ENCODE measurements at regions of chr2 and their contacts with region 1.

Region 1: GRCh38 chr2:24971536-24972314 is at the start of gene DNAJC27:
- DNase-seq: peak; percentile 98 to 99 (median 98)
- H3K4me3 ChIP-seq: peak within 1 kb of the TSS; percentile 82 to 95
- H3K4me3 Mint-ChIP-seq: peak within 1 kb of the TSS; percentile 97 to 99 (median 98)
- H3K27ac ChIP-seq: peak within 1 kb of the TSS; percentile 99
- H3K27ac Mint-ChIP-seq: peak within 1 kb of the TSS; percentile 100
- H3K4me1 ChIP-seq: peaks cover 24% of the 10 kb centered on the region
- H3K4me1 Mint-ChIP-seq: peaks cover 9 to 33% (median 20%) of the 10 kb centered on the region in 4 donors
- H3K27me3 ChIP-seq: no peaks in the 10 kb centered on the region
- H3K27me3 Mint-ChIP-seq: no peaks in the 10 kb centered on the region
- total RNA-seq, gene DNAJC27: 13.2 to 14.2 TPM

Region 2: DNA sequence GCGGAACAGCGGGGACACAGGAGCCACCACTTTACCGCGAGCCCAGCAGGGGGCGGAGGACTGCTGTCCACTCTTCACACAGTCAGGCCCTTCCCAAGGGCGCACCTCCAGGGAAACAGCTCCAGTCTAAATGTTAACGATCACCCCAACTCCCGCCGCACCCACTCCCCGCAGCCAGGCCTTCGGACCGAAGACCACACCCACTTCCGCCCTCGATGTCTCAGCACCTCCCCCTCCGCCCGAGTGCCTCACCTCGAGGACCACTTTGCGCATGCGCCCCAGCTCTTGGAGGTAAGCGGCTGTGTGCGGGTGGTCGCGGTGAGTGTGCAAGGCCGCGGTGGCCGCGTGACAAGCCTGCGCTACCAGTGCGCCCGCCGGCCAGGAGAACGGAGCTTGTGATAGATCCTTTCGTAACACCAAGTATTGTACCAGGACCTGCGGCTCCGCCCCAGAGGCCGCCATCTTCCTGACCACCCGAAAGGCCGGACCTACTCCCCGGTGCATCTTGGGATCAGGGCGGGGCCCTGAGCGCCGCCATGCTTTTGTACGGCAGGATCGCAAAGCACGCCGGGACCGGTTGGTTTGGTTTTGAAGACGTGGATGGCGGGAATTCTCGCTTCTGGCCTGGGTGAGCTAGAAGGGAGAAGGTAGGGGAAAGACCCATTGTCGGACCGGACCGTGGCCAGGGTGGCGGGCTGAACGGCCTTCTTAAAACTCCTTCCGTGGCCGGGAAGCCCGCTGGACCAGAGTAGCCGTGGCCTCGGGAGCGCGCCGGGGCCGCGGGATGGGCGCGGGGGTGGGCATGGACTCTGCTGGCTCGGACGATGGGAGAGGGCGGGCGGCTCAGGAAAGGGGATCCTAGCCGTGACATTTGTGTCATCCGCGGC is 178.6 kb before region 1 on chr2 and contains the starts of genes CENPO and PTRHD1:
- CTCF ChIA-PET with region 1: interaction called, 3 read pairs
- POLR2A ChIA-PET with region 1: interaction called, 3 read pairs
- intact Hi-C with region 1: loop called (anchors 1 kb)
- DNase-seq: peak; percentile 96 to 98 (median 97)
- H3K4me3 ChIP-seq: peak within 1 kb of the TSS; percentile 85 to 97
- H3K4me3 Mint-ChIP-seq: peak within 1 kb of the TSS; percentile 94 to 99 (median 96)
- H3K27ac ChIP-seq: peak within 1 kb of the TSS; percentile 93
- H3K27ac Mint-ChIP-seq: peak within 1 kb of the TSS; percentile 98 to 100 (median 99)
- H3K4me1 ChIP-seq: peaks cover 17% of the 10 kb centered on the region
- H3K4me1 Mint-ChIP-seq: peaks cover 10 to 25% (median 17%) of the 10 kb centered on the region in 4 donors
- H3K27me3 ChIP-seq: no peaks in the 10 kb centered on the region
- H3K27me3 Mint-ChIP-seq: no peaks in the 10 kb centered on the region
- total RNA-seq, gene CENPO: 4.6 to 6.1 TPM
- total RNA-seq, gene PTRHD1: 12.0 to 12.8 TPM

Region 3: GRCh38 chr2:24993406-24994145 is 21.9 kb after region 1 on chr2:
- CTCF ChIA-PET with region 1: interaction called, 10 read pairs
- POLR2A ChIA-PET with region 1: no interaction called
- intact Hi-C with region 1: no loop called
- DNase-seq: no peak
- H3K4me3 ChIP-seq: no peak overlapping the region
- H3K4me3 Mint-ChIP-seq: peak overlapping the region in 1 of 8 donors; percentile 8
- H3K27ac ChIP-seq: no peak overlapping the region
- H3K27ac Mint-ChIP-seq: no peak overlapping the region
- H3K4me1 ChIP-seq: no peaks in the 10 kb centered on the region
- H3K4me1 Mint-ChIP-seq: no peaks in the 10 kb centered on the region
- H3K27me3 ChIP-seq: no peaks in the 10 kb centered on the region
- H3K27me3 Mint-ChIP-seq: peaks cover 5 to 7% of the 10 kb centered on the region in 2 donors

Region 4: GRCh38 chr2:25131567-25132298 is 160.0 kb after region 1 on chr2:
- CTCF ChIA-PET with region 1: interaction called, 102 read pairs
- POLR2A ChIA-PET with region 1: interaction called, 10 read pairs
- intact Hi-C with region 1: no loop called
- DNase-seq: no peak
- H3K4me3 ChIP-seq: no peak overlapping the region
- H3K4me3 Mint-ChIP-seq: peak overlapping the region; percentile 12 to 81 (median 66)
- H3K27ac ChIP-seq: no peak overlapping the region
- H3K27ac Mint-ChIP-seq: peak overlapping the region in 1 of 7 donors; percentile 38
- H3K4me1 ChIP-seq: no peaks in the 10 kb centered on the region
- H3K4me1 Mint-ChIP-seq: peaks cover 3 to 16% (median 9%) of the 10 kb centered on the region in 4 donors
- H3K27me3 ChIP-seq: peaks cover 37% of the 10 kb centered on the region
- H3K27me3 Mint-ChIP-seq: peaks cover 29 to 44% of the 10 kb centered on the region in 2 donors

Region 5: GRCh38 chr2:25215948-25216679 is 244.4 kb after region 1 on chr2:
- CTCF ChIA-PET with region 1: no interaction called
- POLR2A ChIA-PET with region 1: no interaction called
- intact Hi-C with region 1: loop called (anchors 5 kb)
- DNase-seq: peak; percentile 78 to 87 (median 86)
- H3K4me3 ChIP-seq: peak overlapping the region; percentile 51 to 61
- H3K4me3 Mint-ChIP-seq: peak overlapping the region; percentile 81 to 89 (median 83)
- H3K27ac ChIP-seq: peak overlapping the region; percentile 55
- H3K27ac Mint-ChIP-seq: peak overlapping the region; percentile 67 to 93 (median 86)
- H3K4me1 ChIP-seq: peaks cover 9% of the 10 kb centered on the region
- H3K4me1 Mint-ChIP-seq: peaks cover 6 to 29% (median 14%) of the 10 kb centered on the region in 4 donors
- H3K27me3 ChIP-seq: no peaks in the 10 kb centered on the region
- H3K27me3 Mint-ChIP-seq: no peaks in the 10 kb centered on the region

Region 6: DNA sequence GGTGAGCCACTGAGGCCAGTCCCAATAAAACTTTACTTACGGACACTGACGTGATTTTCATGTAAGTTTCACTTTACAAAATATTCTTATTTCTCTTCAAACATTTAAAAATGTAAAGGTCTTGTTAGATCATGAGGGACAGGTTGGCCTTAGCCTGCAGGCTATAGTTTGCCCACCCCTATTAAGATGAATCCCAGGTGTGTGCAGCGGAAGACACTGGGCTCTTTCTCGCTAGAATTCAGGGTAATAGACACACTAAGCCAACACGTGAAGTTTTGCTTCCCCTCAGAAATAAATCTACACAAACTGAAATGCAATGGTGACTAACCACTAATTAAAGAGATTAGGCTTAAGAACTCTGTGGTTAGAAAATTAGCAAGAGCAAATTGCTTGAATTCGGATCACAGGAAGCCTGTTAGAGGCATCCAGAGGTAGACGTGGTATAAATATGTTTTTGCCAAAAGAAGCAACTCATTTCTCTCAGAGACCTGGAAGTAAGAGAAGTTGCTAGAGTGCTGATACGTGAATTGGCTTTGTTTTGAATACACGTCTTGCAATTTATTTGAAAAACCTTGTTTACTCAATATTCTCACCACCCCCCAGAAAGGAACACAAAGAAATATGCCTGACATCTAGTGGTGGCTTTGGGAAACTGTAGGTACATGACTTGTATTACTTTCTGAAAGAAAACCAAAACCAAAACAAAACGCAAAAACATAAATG is 550.1 kb after region 1 on chr2:
- CTCF ChIA-PET with region 1: no interaction called
- POLR2A ChIA-PET with region 1: no interaction called
- intact Hi-C with region 1: loop called (anchors 10 kb)
- DNase-seq: peak; percentile 68 to 76 (median 72)
- H3K4me3 ChIP-seq: no peak overlapping the region
- H3K4me3 Mint-ChIP-seq: peak overlapping the region in 6 of 8 donors; percentile 4 to 75 (median 21)
- H3K27ac ChIP-seq: no peak overlapping the region
- H3K27ac Mint-ChIP-seq: peak overlapping the region in 5 of 7 donors; percentile 48 to 80 (median 54)
- H3K4me1 ChIP-seq: peaks cover 10% of the 10 kb centered on the region
- H3K4me1 Mint-ChIP-seq: peaks cover 4 to 12% (median 7%) of the 10 kb centered on the region in 4 donors
- H3K27me3 ChIP-seq: no peaks in the 10 kb centered on the region
- H3K27me3 Mint-ChIP-seq: no peaks in the 10 kb centered on the region

Region 7: DNA sequence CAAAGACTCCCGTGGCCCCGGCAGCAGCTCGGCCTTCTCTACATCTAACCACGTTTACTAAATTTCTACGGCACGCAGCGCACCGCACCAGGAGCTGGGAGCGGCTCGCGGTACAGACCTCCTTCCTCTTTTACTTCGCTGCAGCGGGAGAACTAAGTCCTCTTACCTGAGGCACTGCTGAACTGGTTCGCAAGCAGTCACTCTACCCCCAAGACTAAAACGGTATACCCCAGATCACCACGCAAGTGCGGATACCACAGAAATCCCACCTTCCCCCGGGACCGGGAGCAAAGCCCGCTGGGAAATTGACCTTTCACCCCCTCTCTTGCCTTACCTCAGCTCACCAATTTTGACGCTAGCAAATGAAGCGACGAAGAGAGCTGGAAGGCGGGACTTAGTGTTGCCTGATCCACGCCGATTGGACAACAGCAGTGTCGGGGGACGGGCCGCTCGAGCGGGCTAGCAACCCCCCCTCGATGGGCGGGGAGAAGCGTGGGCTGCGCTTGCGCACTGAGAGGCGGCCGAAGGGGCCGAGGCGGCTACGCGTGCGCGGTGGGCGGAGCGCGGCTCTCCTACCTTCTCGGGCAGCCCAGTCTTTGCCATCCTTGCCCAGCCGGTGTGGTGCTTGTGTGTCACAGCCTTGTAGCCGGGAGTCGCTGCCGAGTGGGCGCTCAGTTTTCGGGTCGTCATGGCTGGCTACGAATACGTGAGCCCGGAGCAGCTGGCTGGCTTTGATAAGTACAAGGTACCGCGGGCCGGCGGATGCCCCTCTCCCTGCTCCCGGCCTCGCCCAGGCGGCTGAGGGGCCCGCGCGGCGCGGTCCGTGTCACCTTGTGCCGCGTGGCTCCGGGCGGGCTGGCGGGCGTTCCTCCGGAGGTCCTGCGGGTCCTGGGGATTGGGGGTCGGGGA is 1374.1 kb after region 1 on chr2 and contains the start of gene SELENOI:
- CTCF ChIA-PET with region 1: no interaction called
- POLR2A ChIA-PET with region 1: no interaction called
- intact Hi-C with region 1: loop called (anchors 5 kb)
- DNase-seq: peak; percentile 99 to 100 (median 100)
- H3K4me3 ChIP-seq: peak within 1 kb of the TSS; percentile 87 to 98
- H3K4me3 Mint-ChIP-seq: peak within 1 kb of the TSS; percentile 97 to 100 (median 98)
- H3K27ac ChIP-seq: peak within 1 kb of the TSS; percentile 91
- H3K27ac Mint-ChIP-seq: peak within 1 kb of the TSS; percentile 91 to 100 (median 100)
- H3K4me1 ChIP-seq: peaks cover 42% of the 10 kb centered on the region
- H3K4me1 Mint-ChIP-seq: peaks cover 25 to 50% (median 33%) of the 10 kb centered on the region in 4 donors
- H3K27me3 ChIP-seq: no peaks in the 10 kb centered on the region
- H3K27me3 Mint-ChIP-seq: no peaks in the 10 kb centered on the region
- total RNA-seq, gene SELENOI: 19.6 to 20.0 TPM